PC-9 (cell line): ENCODE measurements at regions of chr3 and their contacts with region 1.

Region 1: DNA sequence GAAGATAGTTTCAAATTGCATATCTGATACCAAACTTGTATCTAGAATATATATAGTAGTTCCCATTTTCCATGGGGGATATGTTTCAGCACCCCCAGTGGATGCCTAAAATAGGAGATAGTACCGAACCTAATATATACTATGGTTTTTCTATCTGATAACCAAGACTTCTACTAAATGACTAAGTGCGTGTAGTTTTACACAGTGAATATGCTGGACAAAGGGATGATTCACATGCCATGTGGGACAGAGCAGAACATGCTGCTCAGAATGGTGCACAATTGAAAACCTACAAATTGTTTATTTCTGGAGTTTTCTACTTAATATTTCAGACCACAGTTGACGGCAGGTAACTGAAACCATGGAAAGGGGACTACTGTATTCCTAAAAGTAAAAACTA is 73.4 kb upstream of the TP63 start:
- DNase-seq: no peak
- H3K4me3 ChIP-seq: no peak overlapping the region
- H3K27ac ChIP-seq: no peak overlapping the region
- H3K4me1 ChIP-seq: peaks cover 5% of the 10 kb centered on the region; the same call in 1 of the 2 replicates
- H3K27me3 ChIP-seq: no peaks in the 10 kb centered on the region
- CTCF ChIP-seq: no peak

Region 2: DNA sequence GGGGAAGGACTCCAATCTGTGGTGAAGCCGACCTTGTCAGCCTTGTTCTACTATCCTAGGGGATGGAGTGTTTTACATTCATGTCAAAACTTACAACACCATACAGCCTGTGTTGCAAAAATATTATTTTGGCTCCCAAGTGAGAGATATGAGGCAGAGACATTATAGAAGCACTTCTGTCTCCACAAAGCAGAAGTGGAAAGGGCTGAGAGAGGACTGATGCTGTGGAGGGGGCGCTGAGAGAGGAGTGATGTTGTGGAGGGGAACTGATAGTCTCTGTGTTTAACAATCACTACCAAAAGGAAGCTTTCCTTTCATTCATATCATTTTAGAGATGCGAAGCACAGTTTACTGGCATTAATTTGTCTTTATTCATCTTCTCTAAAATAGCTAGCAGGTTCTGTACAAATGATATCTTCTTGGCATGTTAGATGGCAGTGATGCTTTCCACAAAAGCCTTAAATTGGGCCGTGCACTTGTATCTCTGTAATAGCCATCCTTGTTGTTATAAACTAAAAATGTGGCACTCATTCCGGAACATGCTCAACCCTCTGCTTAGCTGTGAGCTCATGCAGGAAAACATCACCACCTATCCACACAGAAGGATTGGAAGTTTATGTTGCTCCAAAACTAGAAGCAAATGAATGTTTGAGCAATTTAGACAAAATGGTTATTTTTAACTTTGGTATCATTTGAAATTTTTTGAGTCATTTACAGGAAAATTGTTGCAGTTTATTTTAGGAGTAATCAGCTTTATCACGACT is 61.3 kb before region 1 on chr3:
- CTCF ChIA-PET with region 1: no interaction called
- POLR2A ChIA-PET with region 1: no interaction called
- intact Hi-C with region 1: loop called (anchors 1 kb)
- DNase-seq: no peak
- H3K4me3 ChIP-seq: no peak overlapping the region
- H3K27ac ChIP-seq: no peak overlapping the region
- H3K4me1 ChIP-seq: no peaks in the 10 kb centered on the region
- H3K27me3 ChIP-seq: no peaks in the 10 kb centered on the region
- CTCF ChIP-seq: no peak

Region 3: GRCh38 chr3:189927975-189928895 is 370.4 kb after region 1 on chr3:
- CTCF ChIA-PET with region 1: no interaction called
- POLR2A ChIA-PET with region 1: no interaction called
- intact Hi-C with region 1: no loop called
- DNase-seq: peak; percentile 29 to 45
- H3K4me3 ChIP-seq: no peak overlapping the region
- H3K27ac ChIP-seq: peak overlapping the region; percentile 3; the same call in 1 of the 2 replicates
- H3K4me1 ChIP-seq: peaks cover 5% of the 10 kb centered on the region
- H3K27me3 ChIP-seq: no peaks in the 10 kb centered on the region
- CTCF ChIP-seq: no peak